Activated CD4-positive, alpha-beta memory T cell treated with anti-CD3 and anti-CD28 coated beads, Interleukin-2, amount 10 ng/mL, durations not matched to agents 7 days and 5 days (primary cell): ENCODE measurements at regions of chr7 and their contacts with region 1.

Region 1: DNA sequence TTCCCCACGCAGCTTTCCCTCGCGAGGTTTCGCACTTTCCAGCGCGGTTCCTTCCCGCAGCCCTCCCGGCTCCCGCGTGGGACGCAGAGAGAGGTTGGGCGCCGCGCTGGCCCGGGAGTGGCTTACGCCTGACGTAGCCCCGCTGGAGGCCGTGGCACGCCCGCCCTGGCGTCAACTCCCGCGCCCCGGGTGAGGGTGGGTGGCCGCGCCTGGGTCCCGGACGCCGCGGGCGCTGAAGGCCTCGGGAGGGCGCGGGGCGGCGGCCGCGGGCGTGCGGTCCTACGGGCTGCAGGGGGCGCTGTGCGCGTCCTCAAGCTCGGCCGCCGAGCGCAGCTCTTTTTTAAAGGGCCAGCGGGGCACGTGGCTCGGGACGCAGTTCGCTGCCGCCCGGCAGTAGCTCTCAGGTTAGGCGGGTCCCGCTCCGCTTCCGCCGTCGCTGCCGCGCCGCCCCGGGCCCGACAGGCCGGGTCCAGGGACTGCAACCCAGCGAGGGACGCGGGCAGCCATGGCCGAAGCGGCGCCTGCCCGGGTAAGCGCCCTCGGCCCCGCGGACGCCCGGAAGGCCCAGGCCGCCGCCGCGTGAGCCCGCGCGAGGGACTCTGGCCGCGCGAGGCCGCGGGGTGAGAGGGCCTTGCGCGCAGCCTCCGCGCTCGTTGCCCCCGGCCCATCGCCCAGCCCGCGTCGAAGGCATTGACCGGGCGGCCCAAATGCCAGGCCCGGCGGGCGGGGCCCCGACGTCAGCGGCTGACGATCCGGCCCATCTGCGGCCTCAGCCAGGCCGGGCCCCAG is at the start of gene ZNF783:
- DNase-seq: peak; percentile 88
- H3K4me3 Mint-ChIP-seq: peak within 1 kb of the TSS; percentile 79
- H3K27ac Mint-ChIP-seq: peak within 1 kb of the TSS; percentile 58
- H3K4me1 Mint-ChIP-seq: peaks cover 33% of the 10 kb centered on the region
- H3K27me3 Mint-ChIP-seq: no peaks in the 10 kb centered on the region
- total RNA-seq, gene ZNF783: 14.4 to 15.8 TPM

Region 2: GRCh38 chr7:149195180-149196150 is 66.6 kb before region 1 on chr7 and contains the start of gene ZNF282:
- CTCF ChIA-PET with region 1: interaction called, 12 read pairs
- POLR2A ChIA-PET with region 1: interaction called, 11 read pairs
- DNase-seq: peak; percentile 81
- H3K4me3 Mint-ChIP-seq: peak within 1 kb of the TSS; percentile 96
- H3K27ac Mint-ChIP-seq: peak within 1 kb of the TSS; percentile 94
- H3K4me1 Mint-ChIP-seq: peaks cover 57% of the 10 kb centered on the region
- H3K27me3 Mint-ChIP-seq: no peaks in the 10 kb centered on the region
- total RNA-seq, gene ZNF282: 66.1 to 66.6 TPM

Region 3: DNA sequence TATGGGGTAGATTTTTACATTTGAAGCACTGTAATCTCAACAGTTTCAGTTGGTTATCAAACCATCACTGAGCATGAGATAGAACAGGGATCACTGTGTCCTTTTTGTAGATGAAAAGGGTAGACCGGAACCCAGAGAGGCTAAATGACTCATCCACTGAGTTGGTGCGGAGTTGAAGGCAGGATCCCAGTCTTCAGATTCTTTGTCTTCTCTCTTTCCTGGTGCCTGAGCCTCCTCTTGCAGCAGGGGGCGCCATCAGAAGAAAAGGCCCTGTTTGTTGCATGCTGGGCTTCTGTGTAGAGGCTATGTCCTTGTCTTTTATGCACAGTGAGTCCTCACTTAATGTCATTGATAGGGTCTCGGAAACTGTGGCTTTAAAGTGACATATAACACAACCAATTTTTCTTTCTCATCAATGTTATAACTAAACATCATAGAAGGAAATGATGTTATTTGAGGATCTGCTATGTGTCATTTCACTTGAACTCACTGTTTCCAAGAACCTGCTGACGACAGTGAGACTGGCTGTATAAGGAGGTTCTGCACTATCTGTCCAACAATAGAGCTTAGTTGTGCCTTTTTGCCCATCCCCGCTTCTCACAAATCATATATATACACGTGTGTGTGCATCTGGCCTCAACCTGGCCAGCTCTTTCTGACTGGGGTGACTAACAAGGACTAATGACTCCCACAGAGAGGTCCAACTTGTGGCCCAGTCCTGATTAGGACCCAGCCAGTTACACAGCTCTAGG is 52.3 kb before region 1 on chr7:
- CTCF ChIA-PET with region 1: interaction called, 8 read pairs
- POLR2A ChIA-PET with region 1: interaction called, 12 read pairs
- DNase-seq: peak; percentile 90
- H3K4me3 Mint-ChIP-seq: peak overlapping the region; percentile 28
- H3K27ac Mint-ChIP-seq: peak overlapping the region; percentile 83
- H3K4me1 Mint-ChIP-seq: peaks cover 60% of the 10 kb centered on the region
- H3K27me3 Mint-ChIP-seq: no peaks in the 10 kb centered on the region

Region 4: GRCh38 chr7:149284850-149285626 is 23.0 kb after region 1 on chr7:
- CTCF ChIA-PET with region 1: interaction called, 48 read pairs
- POLR2A ChIA-PET with region 1: interaction called, 22 read pairs
- DNase-seq: peak; percentile 98
- H3K4me3 Mint-ChIP-seq: peak overlapping the region; percentile 75
- H3K27ac Mint-ChIP-seq: no peak overlapping the region
- H3K4me1 Mint-ChIP-seq: peaks cover 41% of the 10 kb centered on the region
- H3K27me3 Mint-ChIP-seq: no peaks in the 10 kb centered on the region

Region 5: DNA sequence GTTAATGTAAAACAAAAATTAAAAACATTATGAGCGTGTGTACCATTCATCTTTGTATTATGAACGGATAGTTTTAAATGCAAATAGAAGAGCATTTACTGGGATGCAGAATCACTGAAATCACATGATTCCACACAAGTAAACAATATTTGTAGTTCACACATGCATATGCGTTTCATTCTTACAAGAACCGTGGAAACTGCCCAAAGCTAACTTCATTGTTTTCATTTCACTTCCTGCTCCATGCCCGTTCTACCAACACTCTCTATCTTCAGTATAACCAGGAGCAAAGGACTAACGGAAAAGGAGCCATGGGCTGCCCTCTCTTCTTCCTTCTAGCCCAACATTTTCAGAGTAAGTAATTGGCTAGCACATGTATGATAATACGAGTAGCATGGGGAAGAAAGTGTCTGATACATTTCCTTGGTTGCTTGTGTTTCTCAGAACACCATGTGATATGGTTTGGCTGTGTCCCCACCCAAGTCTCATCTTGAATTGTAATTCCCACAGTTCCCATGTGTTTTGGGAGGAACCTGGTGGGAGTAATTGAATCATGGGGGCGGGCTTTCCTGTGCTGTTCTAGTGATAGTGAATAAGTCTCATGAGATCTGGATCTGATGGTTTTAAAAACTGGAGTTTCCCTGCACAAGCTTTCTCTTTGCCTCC is 38.7 kb after region 1 on chr7:
- CTCF ChIA-PET with region 1: no interaction called
- POLR2A ChIA-PET with region 1: no interaction called
- DNase-seq: no peak
- H3K4me3 Mint-ChIP-seq: no peak overlapping the region
- H3K27ac Mint-ChIP-seq: no peak overlapping the region
- H3K4me1 Mint-ChIP-seq: no peaks in the 10 kb centered on the region
- H3K27me3 Mint-ChIP-seq: no peaks in the 10 kb centered on the region

Region 6: DNA sequence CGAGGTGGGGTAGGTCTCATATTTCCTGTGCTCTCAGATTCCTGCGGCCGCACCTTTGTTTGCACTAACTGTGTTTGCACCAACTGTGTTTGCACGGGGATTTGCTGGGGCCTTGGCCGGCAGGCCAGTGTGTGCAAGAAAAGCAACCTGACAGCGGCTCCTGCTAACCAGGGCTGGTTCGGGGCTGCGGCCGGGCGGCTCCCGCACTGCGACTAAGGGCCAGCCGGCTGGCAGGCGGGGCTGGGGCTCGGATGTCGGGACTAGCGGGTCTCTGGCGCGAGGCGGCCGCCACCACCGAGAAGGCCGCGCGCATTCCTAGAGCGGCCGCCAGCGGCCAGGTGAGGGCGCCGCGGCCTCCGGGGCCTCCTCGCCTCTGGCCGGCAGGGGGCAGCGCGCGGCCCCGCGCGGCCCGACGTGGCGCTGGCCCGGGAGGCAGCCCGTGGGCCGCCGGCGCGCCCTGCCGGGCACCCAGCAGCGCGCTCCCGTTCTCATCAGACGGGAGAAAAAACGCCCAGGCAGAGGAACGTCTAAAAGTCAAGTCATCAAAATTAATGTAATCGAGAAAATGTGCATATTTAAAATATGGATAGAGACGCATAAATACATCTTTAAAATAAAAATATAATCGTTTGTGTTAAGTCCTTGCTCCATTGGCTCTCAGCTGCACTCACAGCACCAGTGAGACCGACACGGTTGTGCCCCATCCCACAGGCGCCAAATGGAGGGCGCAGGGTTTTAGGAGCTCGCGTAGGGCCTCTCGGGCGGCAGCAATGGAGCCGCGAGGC is 160.3 kb after region 1 on chr7:
- CTCF ChIA-PET with region 1: interaction called, 10 read pairs
- POLR2A ChIA-PET with region 1: interaction called, 8 read pairs
- DNase-seq: peak; percentile 77
- H3K4me3 Mint-ChIP-seq: peak overlapping the region; percentile 69
- H3K27ac Mint-ChIP-seq: peak overlapping the region; percentile 35
- H3K4me1 Mint-ChIP-seq: peaks cover 7% of the 10 kb centered on the region
- H3K27me3 Mint-ChIP-seq: peaks cover 3% of the 10 kb centered on the region